Sigmoid colon (tissue), 7 donors: ENCODE measurements at regions of chr3 and their contacts with region 1.

Region 1: DNA sequence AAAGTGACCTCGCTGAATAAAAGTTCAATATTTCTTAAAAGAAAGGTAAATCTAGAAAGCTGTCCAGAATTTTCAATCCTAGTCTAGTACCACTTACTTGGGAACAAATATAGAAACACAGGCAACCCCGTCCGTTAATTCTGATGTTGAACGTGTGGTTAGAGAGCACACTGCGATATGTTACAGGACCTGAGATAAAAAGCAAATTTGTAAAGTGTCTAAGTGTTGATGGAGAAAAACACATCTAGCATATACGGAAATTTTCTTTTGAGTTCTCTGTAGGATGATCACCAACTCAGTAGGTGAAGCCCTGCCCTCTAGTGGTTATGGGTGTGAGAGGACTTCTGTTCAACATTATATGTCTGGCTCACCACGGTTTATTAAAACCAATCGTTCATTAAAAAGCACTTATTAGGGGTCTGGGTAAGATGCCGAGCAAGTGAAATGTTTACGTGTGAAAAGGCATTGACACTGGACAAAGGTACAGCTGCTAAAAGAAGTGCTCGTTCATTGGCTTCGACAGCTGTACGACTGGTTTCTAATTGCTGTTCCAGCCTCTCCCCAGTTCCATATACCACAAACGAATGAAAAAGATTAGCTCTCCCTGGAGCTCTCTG is 1.0 kb upstream of the ATP2C1 start:
- DNase-seq: peak; percentile 77
- H3K4me3 ChIP-seq: peak overlapping the region; percentile 70 to 88 (median 78)
- H3K27ac ChIP-seq: peak overlapping the region; percentile 92 to 98 (median 95)
- H3K4me1 ChIP-seq: peaks cover 0 to 23% (median 20%) of the 10 kb centered on the region in 4 donors
- H3K27me3 ChIP-seq: no peaks in the 10 kb centered on the region
- CTCF ChIP-seq: peak; percentile 75 to 91 (median 83)
- EP300 ChIP-seq: no peak
- POLR2A ChIP-seq: no peak

Region 2: GRCh38 chr3:130746246-130747039 is 146.4 kb before region 1 on chr3 and contains the start of gene PIK3R4:
- intact Hi-C with region 1: loop called (anchors 1 kb)
- DNase-seq: peak; percentile 97
- H3K4me3 ChIP-seq: peak within 1 kb of the TSS; percentile 75 to 95 (median 88)
- H3K27ac ChIP-seq: peak within 1 kb of the TSS; percentile 82 to 91 (median 88)
- H3K4me1 ChIP-seq: peaks cover 0 to 47% (median 44%) of the 10 kb centered on the region in 4 donors
- H3K27me3 ChIP-seq: no peaks in the 10 kb centered on the region
- CTCF ChIP-seq: no peak
- EP300 ChIP-seq: no peak
- POLR2A ChIP-seq: peak; percentile 51 to 69
- total RNA-seq, gene PIK3R4: 25.8 to 39.2 (median 31.6) TPM

Region 3: GRCh38 chr3:130759699-130760338 is 133.0 kb before region 1 on chr3:
- intact Hi-C with region 1: loop called (anchors 1 kb)
- DNase-seq: no peak
- H3K4me3 ChIP-seq: no peak overlapping the region
- H3K27ac ChIP-seq: no peak overlapping the region
- H3K4me1 ChIP-seq: no peaks in the 10 kb centered on the region
- H3K27me3 ChIP-seq: no peaks in the 10 kb centered on the region
- CTCF ChIP-seq: peak; percentile 36 to 75 (median 60)
- EP300 ChIP-seq: no peak
- POLR2A ChIP-seq: no peak